Ovary (tissue), 10 donors: ENCODE measurements at regions of chr3 and their contacts with region 1.

Region 1: GRCh38 chr3:172501560-172501959 is 21.7 kb downstream of the TNFSF10 start:
- DNase-seq: no peak
- H3K4me3 ChIP-seq: no peak overlapping the region
- H3K27ac ChIP-seq: no peak overlapping the region
- H3K4me1 ChIP-seq: no peaks in the 10 kb centered on the region
- H3K27me3 ChIP-seq: no peaks in the 10 kb centered on the region
- CTCF ChIP-seq: no peak
- EP300 ChIP-seq: no peak
- POLR2A ChIP-seq: no peak

Region 2: DNA sequence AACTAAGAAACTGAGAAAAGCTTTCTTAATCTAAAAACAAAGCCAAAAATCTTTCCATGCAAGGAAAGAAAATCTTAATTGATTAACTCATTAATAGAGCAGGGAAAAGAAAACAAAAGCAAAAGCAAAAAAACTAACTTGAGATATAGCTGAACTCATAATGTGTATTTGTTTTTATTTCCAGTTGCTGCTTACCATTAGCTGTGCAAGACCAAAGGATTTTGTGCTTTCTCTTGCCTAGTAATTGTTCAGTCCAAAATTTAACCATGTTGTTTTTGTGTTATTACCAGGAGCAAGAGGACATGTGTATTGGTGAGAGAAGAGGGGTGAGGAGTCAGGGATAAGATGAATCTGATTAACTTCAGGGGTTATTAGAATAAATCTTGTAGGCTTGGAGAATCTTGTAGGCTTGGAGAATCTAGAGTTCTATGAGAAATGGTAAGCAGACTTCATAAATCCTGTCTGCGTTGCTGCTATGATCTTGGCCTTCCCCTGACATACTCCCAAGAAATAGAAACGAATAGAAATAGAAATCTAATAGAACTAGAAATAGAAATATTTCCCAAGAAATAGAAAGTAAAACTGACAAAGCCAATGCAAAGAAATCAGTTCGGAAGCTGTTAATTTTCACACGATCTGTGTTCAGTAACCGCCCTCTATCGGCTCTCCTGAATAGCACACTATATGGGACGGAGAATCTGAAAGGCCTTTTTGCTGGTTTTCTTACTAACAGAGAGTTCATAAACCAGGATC is 94.3 kb after region 1 on chr3:
- intact Hi-C with region 1: loop called in 3 of 4 experiments (anchors 5 to 10 kb)
- DNase-seq: peak in 2 of 5 donors; percentile 18 to 63
- H3K4me3 ChIP-seq: peak overlapping the region; percentile 22
- H3K27ac ChIP-seq: peak overlapping the region in 1 of 2 donors; percentile 73
- H3K4me1 ChIP-seq: no peaks in the 10 kb centered on the region
- H3K27me3 ChIP-seq: no peaks in the 10 kb centered on the region
- CTCF ChIP-seq: peak; percentile 57 to 89 (median 77)
- EP300 ChIP-seq: no peak
- POLR2A ChIP-seq: no peak